Sigmoid colon (tissue), 7 donors: ENCODE measurements at regions of chr2 and their contacts with region 1.

Region 1: DNA sequence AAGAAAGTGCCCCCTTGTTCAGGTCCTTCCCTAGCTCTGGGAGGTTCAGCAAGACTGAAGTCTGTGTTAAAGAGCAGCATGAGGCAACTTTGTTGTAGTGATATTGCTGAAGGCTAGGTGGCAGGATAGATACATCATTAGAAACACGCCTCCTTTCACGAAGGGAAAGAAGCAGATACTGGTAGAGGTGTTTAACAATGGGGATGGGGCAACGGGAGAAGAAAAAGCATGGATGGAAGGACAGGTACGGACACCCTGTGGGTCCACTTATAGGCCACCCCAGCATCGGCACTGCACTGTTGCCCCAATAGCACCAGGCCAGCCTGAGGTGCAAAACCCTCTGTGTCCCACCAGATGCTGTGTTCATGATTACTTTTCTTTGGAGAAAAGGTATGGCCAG is 3.5 kb upstream of the IGFBP5 start:
- DNase-seq: peak; percentile 63
- H3K4me3 ChIP-seq: no peak overlapping the region
- H3K27ac ChIP-seq: peak overlapping the region; percentile 85 to 93 (median 92)
- H3K4me1 ChIP-seq: peaks cover 0 to 75% (median 71%) of the 10 kb centered on the region in 4 donors
- H3K27me3 ChIP-seq: no peaks in the 10 kb centered on the region
- CTCF ChIP-seq: peak; percentile 46 to 63 (median 53)
- EP300 ChIP-seq: no peak
- POLR2A ChIP-seq: no peak

Region 2: GRCh38 chr2:216465580-216466197 is 233.2 kb before region 1 on chr2:
- intact Hi-C with region 1: no loop called
- DNase-seq: no peak
- H3K4me3 ChIP-seq: no peak overlapping the region
- H3K27ac ChIP-seq: no peak overlapping the region
- H3K4me1 ChIP-seq: no peaks in the 10 kb centered on the region
- H3K27me3 ChIP-seq: no peaks in the 10 kb centered on the region
- CTCF ChIP-seq: no peak
- EP300 ChIP-seq: no peak
- POLR2A ChIP-seq: no peak

Region 3: DNA sequence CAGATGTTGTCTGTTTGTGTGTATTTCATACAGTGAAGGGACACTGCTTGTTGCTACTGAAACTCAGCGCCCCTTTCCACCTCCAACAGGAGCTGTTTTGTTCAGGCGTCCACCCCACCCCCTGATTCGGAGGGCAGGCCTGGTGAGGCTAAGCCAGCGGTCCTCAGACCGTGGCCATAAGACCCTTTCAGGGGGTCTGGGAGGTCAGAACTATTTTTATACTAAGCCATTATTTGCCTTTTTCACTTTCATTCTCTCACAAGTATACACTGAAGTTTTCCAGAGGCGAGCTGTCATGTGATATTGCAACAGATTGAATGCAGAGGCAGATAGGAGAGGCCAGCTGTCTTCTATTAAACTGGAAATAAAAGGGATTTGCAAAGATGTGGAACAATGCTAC is 36.2 kb after region 1 on chr2:
- intact Hi-C with region 1: loop called (anchors 5 kb)
- DNase-seq: peak; percentile 83
- H3K4me3 ChIP-seq: no peak overlapping the region
- H3K27ac ChIP-seq: peak overlapping the region; percentile 48 to 87 (median 84)
- H3K4me1 ChIP-seq: peaks cover 0 to 88% (median 63%) of the 10 kb centered on the region in 4 donors
- H3K27me3 ChIP-seq: no peaks in the 10 kb centered on the region
- CTCF ChIP-seq: no peak
- EP300 ChIP-seq: peak; percentile 69 to 95 (median 86)
- POLR2A ChIP-seq: no peak

Region 4: DNA sequence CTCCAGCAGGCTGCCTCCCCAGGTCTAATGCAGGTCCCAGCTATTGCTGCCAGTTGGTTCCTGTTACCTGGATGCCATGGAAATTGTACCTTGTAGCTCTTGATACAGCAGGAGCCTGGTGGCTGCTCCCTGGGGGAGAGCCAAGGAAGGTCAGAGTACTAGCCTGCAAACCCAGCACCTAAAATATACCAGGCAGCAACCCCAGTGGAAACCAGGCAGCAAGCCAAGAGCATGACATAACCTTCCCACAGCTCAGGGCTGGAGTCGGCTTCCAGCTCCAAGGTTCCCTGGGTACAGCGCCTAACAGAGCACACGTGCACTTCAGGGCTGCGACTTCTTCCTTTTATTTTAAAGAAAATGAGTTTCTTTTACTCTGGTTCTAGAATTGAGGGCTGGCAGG is 130.6 kb after region 1 on chr2:
- intact Hi-C with region 1: loop called (anchors 5 kb)
- DNase-seq: peak; percentile 96
- H3K4me3 ChIP-seq: no peak overlapping the region
- H3K27ac ChIP-seq: peak overlapping the region in 3 of 4 donors; percentile 45 to 76 (median 75)
- H3K4me1 ChIP-seq: peaks cover 0 to 42% (median 38%) of the 10 kb centered on the region in 4 donors
- H3K27me3 ChIP-seq: no peaks in the 10 kb centered on the region
- CTCF ChIP-seq: no peak
- EP300 ChIP-seq: peak in 2 of 4 donors; percentile 4 to 27
- POLR2A ChIP-seq: no peak

Region 5: GRCh38 chr2:217064234-217065024 is 365.5 kb after region 1 on chr2:
- intact Hi-C with region 1: loop called (anchors 2 kb)
- DNase-seq: peak; percentile 74
- H3K4me3 ChIP-seq: peak overlapping the region in 3 of 4 donors; percentile 22 to 32 (median 25)
- H3K27ac ChIP-seq: peak overlapping the region in 3 of 4 donors; percentile 70 to 79 (median 75)
- H3K4me1 ChIP-seq: peaks cover 0 to 45% (median 32%) of the 10 kb centered on the region in 4 donors
- H3K27me3 ChIP-seq: no peaks in the 10 kb centered on the region
- CTCF ChIP-seq: no peak
- EP300 ChIP-seq: peak in 1 of 4 donors; percentile 58
- POLR2A ChIP-seq: no peak

Region 6: DNA sequence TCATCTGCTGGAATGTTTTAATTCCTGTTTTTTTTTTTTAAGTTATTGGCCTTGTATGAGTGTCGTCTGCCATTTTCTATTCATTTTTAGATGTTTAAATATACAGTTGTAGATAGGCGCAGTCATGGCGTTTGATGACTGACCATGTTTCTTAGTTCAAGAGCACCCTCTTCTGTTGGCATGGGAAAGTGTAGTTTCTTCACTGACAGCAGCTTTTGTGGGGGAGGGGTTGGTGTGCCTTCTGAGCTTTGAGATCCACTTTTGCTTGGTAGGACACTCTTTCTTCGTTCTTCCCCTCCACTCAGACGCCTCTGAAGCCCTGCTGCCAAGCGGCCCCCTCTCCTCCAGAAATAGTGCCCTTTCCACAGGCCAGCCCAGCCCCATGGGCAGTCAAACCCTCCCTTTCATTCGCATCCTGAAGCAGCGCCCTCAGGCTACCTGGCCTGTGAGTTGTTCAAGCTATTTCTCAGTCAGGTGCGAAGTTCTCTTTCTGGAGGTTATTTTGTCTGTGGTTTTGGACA is 811.9 kb after region 1 on chr2:
- intact Hi-C with region 1: loop called (anchors 2 kb)
- DNase-seq: peak; percentile 85
- H3K4me3 ChIP-seq: no peak overlapping the region
- H3K27ac ChIP-seq: peak overlapping the region in 3 of 4 donors; percentile 3 to 39 (median 18)
- H3K4me1 ChIP-seq: peaks cover 0 to 39% (median 15%) of the 10 kb centered on the region in 4 donors
- H3K27me3 ChIP-seq: no peaks in the 10 kb centered on the region
- CTCF ChIP-seq: peak; percentile 58 to 88 (median 82)
- EP300 ChIP-seq: peak in 1 of 4 donors; percentile 24
- POLR2A ChIP-seq: no peak

Region 7: GRCh38 chr2:217756375-217757107 is 1057.6 kb after region 1 on chr2:
- intact Hi-C with region 1: loop called (anchors 5 kb)
- DNase-seq: peak; percentile 87
- H3K4me3 ChIP-seq: peak overlapping the region in 1 of 4 donors; percentile 20
- H3K27ac ChIP-seq: peak overlapping the region in 3 of 4 donors; percentile 52 to 63 (median 61)
- H3K4me1 ChIP-seq: peaks cover 0 to 59% (median 48%) of the 10 kb centered on the region in 4 donors
- H3K27me3 ChIP-seq: no peaks in the 10 kb centered on the region
- CTCF ChIP-seq: peak; percentile 55 to 91 (median 80)
- EP300 ChIP-seq: peak in 1 of 4 donors; percentile 4
- POLR2A ChIP-seq: no peak